ENCODE measurements at regions of chr1 and their contacts with region 1.

Region 1: GRCh38 chr1:156677616-156678596 is 699 bp upstream of the NES start:
- DNase-seq: peak in 3 of 5 donors; percentile 8 to 38 (median 27)
- H3K4me3 ChIP-seq: peak overlapping the region; percentile 26
- H3K4me3 Mint-ChIP-seq: peak overlapping the region in 4 of 7 donors; percentile 20 to 54 (median 38)
- H3K27ac ChIP-seq: peak overlapping the region; percentile 33
- H3K27ac Mint-ChIP-seq: peak overlapping the region in 1 of 8 donors; percentile 3
- H3K4me1 ChIP-seq: peaks cover 10% of the 10 kb centered on the region
- H3K4me1 Mint-ChIP-seq: peaks cover 8 to 16% (median 13%) of the 10 kb centered on the region in 3 donors
- H3K27me3 ChIP-seq: peaks cover 39% of the 10 kb centered on the region
- H3K27me3 Mint-ChIP-seq: peaks cover 48 to 73% of the 10 kb centered on the region in 2 donors

Region 2: GRCh38 chr1:156705918-156706656 is 28.2 kb after region 1 on chr1:
- CTCF ChIA-PET with region 1: interaction called, 14 read pairs
- POLR2A ChIA-PET with region 1: no interaction called
- DNase-seq: peak; percentile 62 to 79 (median 67)
- H3K4me3 ChIP-seq: peak overlapping the region; percentile 92
- H3K4me3 Mint-ChIP-seq: peak overlapping the region; percentile 86 to 95 (median 88)
- H3K27ac ChIP-seq: peak overlapping the region; percentile 43
- H3K27ac Mint-ChIP-seq: peak overlapping the region; percentile 54 to 96 (median 84)
- H3K4me1 ChIP-seq: peaks cover 30% of the 10 kb centered on the region
- H3K4me1 Mint-ChIP-seq: peaks cover 22 to 38% (median 26%) of the 10 kb centered on the region in 3 donors
- H3K27me3 ChIP-seq: peaks cover 9% of the 10 kb centered on the region
- H3K27me3 Mint-ChIP-seq: peaks cover 5 to 13% of the 10 kb centered on the region in 2 donors

Region 3: GRCh38 chr1:156927215-156928042 is 249.5 kb after region 1 on chr1:
- CTCF ChIA-PET with region 1: no interaction called
- POLR2A ChIA-PET with region 1: no interaction called
- DNase-seq: peak; percentile 35 to 70 (median 43)
- H3K4me3 ChIP-seq: no peak overlapping the region
- H3K4me3 Mint-ChIP-seq: peak overlapping the region in 4 of 7 donors; percentile 15 to 50 (median 29)
- H3K27ac ChIP-seq: no peak overlapping the region
- H3K27ac Mint-ChIP-seq: peak overlapping the region in 1 of 8 donors; percentile 56
- H3K4me1 ChIP-seq: peaks cover 7% of the 10 kb centered on the region
- H3K4me1 Mint-ChIP-seq: peaks cover 12 to 38% (median 13%) of the 10 kb centered on the region in 3 donors
- H3K27me3 ChIP-seq: peaks cover 31% of the 10 kb centered on the region
- H3K27me3 Mint-ChIP-seq: peaks cover 71 to 90% of the 10 kb centered on the region in 2 donors

Measured in CD8-positive, alpha-beta memory T cell (primary cell).